ENCODE measurements at regions of chr9 and their contacts with region 1.

Region 1: GRCh38 chr9:76562511-76562911 is 103.5 kb downstream of the GCNT1 start:
- DNase-seq: peak; percentile 71 to 89 (median 85)
- H3K4me3 ChIP-seq: peak overlapping the region in 1 of 3 experiments; percentile 33
- H3K4me3 Mint-ChIP-seq: peak overlapping the region; percentile 38 to 60
- H3K27ac ChIP-seq: peak overlapping the region; percentile 67 to 80
- H3K27ac Mint-ChIP-seq: peak overlapping the region; percentile 79 to 93 (median 92)
- H3K4me1 ChIP-seq: peaks cover 59 to 71% of the 10 kb centered on the region in 2 donors
- H3K4me1 Mint-ChIP-seq: peaks cover 63% of the 10 kb centered on the region
- H3K27me3 ChIP-seq: no peaks in the 10 kb centered on the region
- H3K27me3 Mint-ChIP-seq: no peaks in the 10 kb centered on the region
- CTCF ChIP-seq: no peak

Region 2: GRCh38 chr9:76595645-76596044 is 33.1 kb after region 1 on chr9:
- intact Hi-C with region 1: loop called in 1 of 2 experiments (anchors 5 kb)
- DNase-seq: peak; percentile 90 to 95 (median 95)
- H3K4me3 ChIP-seq: no peak overlapping the region
- H3K4me3 Mint-ChIP-seq: no peak overlapping the region
- H3K27ac ChIP-seq: peak overlapping the region; percentile 74 to 91
- H3K27ac Mint-ChIP-seq: peak overlapping the region; percentile 87 to 97 (median 92)
- H3K4me1 ChIP-seq: peaks cover 58 to 67% of the 10 kb centered on the region in 2 donors
- H3K4me1 Mint-ChIP-seq: peaks cover 59% of the 10 kb centered on the region
- H3K27me3 ChIP-seq: no peaks in the 10 kb centered on the region
- H3K27me3 Mint-ChIP-seq: peaks cover 0 to 4% (median 2%) of the 10 kb centered on the region in 3 donors
- CTCF ChIP-seq: no peak

Region 3: GRCh38 chr9:76773036-76773435 is 210.5 kb after region 1 on chr9:
- intact Hi-C with region 1: no loop called
- DNase-seq: no peak
- H3K4me3 ChIP-seq: no peak overlapping the region
- H3K4me3 Mint-ChIP-seq: no peak overlapping the region
- H3K27ac ChIP-seq: no peak overlapping the region
- H3K27ac Mint-ChIP-seq: no peak overlapping the region
- H3K4me1 ChIP-seq: no peaks in the 10 kb centered on the region
- H3K4me1 Mint-ChIP-seq: no peaks in the 10 kb centered on the region
- H3K27me3 ChIP-seq: no peaks in the 10 kb centered on the region
- H3K27me3 Mint-ChIP-seq: peaks cover 3 to 11% (median 5%) of the 10 kb centered on the region in 3 donors
- CTCF ChIP-seq: no peak